GM10248 (cell line): ENCODE measurements at regions of chr12 and their contacts with region 1.

Region 1: GRCh38 chr12:69639400-69640016 is 28.8 kb upstream of the LRRC10 start:
- DNase-seq: peak; percentile 77
- CTCF ChIP-seq: peak; percentile 84

Region 2: GRCh38 chr12:69354556-69355187 is 284.8 kb before region 1 on chr12:
- CTCF ChIA-PET with region 1: interaction called, 61 read pairs
- POLR2A ChIA-PET with region 1: no interaction called
- DNase-seq: no peak
- CTCF ChIP-seq: no peak

Region 3: DNA sequence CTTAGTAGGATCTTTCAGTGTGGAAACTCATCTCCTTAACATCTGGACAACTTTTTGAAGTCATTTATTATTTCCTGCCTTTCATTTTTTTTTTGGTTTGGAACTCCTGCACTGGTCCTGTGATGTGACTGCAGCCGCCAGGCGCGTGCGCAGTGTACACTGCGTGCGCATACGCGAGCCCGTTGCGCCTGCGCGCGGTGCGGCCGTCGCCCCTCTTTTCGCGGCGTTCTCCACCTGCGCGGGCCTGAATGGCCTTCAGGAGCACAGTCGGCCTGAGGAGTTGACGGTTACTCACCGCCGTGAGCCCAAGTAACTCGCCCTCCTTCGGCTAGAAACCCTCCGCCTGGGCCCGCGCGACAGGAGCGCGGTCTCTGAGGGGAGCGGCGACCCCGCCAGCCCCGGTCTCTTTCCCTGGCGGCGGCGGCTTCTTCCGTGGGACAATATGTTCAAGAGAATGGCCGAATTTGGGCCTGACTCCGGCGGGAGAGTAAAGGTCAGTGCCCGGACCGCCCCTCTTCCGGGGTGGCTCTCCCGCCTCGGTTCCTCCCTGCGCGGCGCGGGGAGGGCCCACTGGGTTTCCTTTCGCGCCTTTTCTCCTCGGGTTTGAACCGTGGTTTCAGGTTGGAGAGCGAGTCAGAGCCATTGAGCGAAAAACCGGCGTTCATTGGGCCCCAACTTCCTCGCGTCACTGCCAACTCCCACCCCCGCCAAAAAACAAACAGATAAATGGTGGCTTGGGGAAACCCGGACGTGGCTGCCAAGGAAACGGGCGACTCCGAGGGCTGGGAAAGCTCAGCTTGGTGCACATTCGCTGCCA is 279.8 kb before region 1 on chr12 and contains the start of gene YEATS4:
- CTCF ChIA-PET with region 1: interaction called, 61 read pairs
- POLR2A ChIA-PET with region 1: interaction called, 3 read pairs
- DNase-seq: peak; percentile 93
- CTCF ChIP-seq: no peak

Region 4: GRCh38 chr12:69388371-69388770 is 251.1 kb before region 1 on chr12:
- CTCF ChIA-PET with region 1: interaction called, 16 read pairs
- POLR2A ChIA-PET with region 1: no interaction called
- DNase-seq: peak; percentile 15
- CTCF ChIP-seq: peak; percentile 27

Region 5: DNA sequence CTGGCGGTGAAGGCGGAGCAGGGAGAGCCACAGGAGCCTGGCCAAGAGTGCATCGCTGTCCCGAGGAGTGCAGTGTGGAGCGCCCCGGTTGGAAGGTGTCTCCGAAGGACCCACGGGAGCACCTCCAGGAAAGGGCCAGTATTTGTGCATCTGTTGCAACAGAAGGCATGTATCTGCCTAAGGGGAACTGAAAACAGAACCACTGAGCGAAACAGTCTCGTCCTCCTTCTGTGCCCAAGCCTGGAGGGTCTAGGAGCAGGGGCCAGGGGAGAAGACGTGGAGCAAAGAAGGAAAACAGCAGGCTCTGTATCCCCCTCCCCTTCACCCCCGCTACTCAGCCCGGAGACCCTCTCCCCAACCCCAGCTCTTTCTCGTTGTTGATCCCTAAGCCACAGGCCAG is 23.5 kb before region 1 on chr12:
- CTCF ChIA-PET with region 1: interaction called, 24 read pairs
- POLR2A ChIA-PET with region 1: no interaction called
- DNase-seq: no peak
- CTCF ChIP-seq: no peak

Region 6: DNA sequence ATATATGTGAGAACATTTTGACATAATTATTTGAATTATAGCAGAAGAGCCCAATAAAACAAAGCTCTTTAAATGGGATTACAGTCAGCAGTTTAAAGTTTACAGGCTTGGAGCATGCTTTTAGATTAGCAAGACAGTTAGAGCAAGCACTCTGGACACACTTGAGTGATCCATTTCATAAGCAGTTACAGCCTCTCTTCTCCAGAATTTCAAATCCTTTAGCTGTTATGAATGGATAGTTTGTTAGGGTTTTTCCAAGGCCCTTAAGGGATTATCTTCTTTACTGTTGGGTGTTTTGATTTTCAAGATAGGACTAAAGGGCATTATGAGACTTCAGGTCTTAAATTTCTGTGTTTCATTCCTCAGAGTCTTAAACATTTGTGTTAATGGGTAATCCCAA is 23.3 kb after region 1 on chr12:
- CTCF ChIA-PET with region 1: interaction called, 10 read pairs
- POLR2A ChIA-PET with region 1: no interaction called
- DNase-seq: no peak
- CTCF ChIP-seq: no peak